ENCODE measurements at regions of chr13 and their contacts with region 1.

Region 1: DNA sequence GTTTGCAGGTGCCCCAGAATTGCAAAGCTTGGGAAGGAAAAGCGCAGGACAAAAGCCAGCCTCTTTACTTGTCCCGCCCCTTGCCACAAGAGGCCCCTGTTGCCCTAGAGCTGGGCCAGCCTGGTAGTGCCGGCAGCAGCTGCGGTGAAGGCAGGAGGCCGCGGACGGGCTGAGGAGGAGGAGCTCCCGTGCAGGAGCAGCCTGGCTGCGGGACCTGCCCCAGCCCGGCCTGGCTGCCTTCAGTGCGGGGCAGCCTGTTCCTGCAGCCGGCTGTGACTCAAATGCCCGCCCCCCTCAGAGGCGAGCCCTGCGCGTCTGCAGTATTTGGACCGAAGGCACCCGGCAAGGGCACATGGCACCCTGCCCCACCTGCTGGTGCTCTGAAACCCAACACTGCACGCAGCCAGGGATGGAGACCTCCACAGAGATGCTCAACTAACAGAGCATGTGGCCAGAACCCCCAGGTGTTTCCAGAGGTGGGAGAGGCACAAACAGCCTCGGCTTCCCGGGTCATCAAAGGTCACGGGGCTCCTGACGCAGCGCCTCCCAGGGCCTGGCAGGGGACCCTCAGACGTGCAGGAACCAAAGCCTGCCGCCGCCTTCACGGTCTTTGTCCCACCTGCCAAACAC is 29.7 kb downstream of the NAXD start:
- DNase-seq: no peak
- H3K4me3 ChIP-seq: no peak overlapping the region
- CTCF ChIP-seq: peak; percentile 43

Region 2: GRCh38 chr13:110244071-110244830 is 400.8 kb before region 1 on chr13:
- in situ Hi-C with region 1: no loop called
- DNase-seq: no peak
- H3K4me3 ChIP-seq: no peak overlapping the region
- CTCF ChIP-seq: no peak

Region 3: GRCh38 chr13:110676595-110677587 is 31.9 kb after region 1 on chr13:
- in situ Hi-C with region 1: loop called (anchors 5 kb)
- DNase-seq: no peak
- H3K4me3 ChIP-seq: no peak overlapping the region
- CTCF ChIP-seq: no peak

Region 4: DNA sequence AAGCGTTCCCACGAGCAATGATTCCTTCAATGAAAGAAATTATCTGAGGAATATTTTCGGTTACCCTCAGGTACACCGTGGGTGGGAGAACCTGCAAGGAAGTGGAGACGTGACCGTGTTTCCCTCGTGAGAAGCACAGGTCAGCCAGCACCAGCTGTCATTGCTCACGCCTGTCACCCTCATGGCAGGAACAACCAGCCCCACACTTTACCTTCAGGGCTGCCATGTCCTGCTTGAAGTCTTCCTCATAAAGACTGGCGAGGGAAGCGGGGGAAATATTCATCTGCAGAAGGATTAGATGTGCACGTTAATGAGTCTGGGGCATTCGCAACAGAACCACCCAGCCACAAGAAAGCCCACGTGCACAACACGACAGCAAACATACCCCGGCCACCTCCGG is 42.7 kb after region 1 on chr13:
- in situ Hi-C with region 1: no loop called
- DNase-seq: no peak
- H3K4me3 ChIP-seq: no peak overlapping the region
- CTCF ChIP-seq: no peak

Measured in astrocyte of the cerebellum (primary cell).